ENCODE measurements at regions of chr10 and their contacts with region 1.

Region 1: DNA sequence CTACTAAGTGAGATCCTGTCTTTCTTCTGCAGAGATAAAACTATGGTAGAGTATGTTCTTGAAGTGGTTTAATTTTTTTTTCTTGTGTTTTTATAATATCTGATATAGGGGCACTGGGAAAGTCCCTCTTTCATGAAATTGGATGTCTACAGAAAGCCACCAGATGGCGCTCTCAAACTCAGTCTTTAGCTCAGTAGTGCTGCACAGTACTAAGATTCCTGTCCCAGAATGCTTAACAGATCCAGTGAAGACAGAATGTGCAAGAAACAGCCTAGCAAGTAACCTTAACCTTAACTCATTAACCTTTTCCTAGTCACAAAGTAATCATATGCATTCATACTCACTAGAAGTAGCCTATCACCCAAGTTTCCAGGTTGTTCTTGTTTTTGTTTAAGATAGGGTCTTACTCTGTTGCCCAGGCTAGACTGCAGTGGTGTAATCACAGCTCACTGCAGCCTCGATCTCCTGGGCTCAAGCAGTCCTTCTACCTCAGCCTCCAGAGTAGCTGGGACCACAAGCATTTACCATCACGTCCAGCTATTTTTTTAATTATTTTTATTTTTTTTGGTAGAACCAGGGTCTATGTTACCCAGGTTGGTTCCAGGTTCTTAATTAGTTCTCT is 56.7 kb downstream of the IDE start:
- DNase-seq: peak; percentile 42 to 73
- ATAC-seq: peak; percentile 89

Region 2: DNA sequence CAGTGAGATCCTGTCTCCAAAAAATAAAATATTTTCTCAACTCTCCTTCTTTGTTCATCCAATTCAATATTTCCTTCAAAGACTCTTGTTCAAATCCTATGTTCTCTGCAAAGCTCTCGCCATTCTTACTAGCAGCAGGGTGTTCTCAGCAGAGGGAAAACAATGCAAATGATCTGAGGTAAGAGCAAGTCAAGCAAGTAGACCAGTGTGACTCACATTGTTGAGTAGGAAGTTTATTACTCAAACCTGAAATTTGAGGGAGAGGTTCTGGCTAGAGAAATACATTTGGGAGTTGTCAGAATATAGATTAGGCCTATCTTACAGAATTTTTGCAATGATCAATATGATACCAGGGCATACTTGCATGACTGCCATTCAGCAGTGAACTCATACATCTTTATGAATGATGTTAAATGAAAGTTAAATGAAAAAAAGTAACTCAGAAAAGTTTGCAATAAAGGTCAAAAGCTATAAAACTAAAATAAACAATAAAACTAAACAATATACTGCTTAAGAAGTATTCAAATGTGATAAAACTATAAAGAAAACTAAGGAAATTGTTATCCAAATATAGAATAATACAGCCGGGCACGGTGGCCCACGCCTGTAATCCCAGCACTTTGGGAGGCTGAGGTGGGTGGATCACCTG is 50.9 kb after region 1 on chr10:
- intact Hi-C with region 1: loop called in 1 of 2 experiments (anchors 10 kb)
- DNase-seq: no peak
- ATAC-seq: peak; percentile 86

Region 3: DNA sequence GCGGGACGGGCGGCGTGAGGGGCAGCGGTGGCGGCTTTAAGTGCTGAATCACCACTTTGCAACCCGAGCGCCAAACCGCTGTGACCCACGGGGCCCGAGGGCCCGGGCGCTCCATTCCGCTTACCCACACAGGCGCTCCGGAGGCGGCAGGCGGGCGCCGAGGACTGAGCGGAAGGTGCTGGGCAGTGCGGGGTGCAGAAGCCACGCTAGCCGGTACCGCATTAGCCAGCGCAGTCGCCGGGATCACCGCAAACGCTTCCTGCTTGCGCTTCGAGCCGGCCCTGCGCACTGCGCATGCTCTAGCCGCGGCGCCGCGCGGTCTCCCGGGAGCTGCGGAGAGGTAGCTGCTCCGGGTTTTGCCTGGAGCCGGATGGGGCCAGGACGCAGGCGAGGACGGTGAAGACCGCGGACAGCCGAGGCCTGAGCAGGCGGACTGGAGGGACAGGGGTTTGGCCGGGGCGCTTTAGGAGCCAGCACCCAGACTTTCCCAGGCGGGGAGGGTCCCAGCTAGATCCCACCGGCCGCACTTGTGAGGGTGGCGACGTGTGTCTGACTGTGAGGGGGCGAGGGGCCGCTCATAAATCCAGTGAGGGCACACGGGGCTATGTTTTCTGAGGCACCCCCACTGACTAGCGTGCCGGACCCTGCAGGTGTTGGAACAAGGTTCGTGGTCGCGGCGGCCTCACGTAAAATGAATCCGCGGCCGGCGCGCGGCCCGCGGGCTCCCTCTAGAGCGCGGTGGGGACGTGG is 56.8 kb after region 1 on chr10 and contains the start of gene IDE:
- intact Hi-C with region 1: loop called (anchors 2 to 10 kb)
- DNase-seq: peak; percentile 88 to 90
- ATAC-seq: peak; percentile 92
- total RNA-seq, gene IDE: 40.4 to 43.5 TPM